ENCODE measurements at regions of chr19 and their contacts with region 1.

Region 1: DNA sequence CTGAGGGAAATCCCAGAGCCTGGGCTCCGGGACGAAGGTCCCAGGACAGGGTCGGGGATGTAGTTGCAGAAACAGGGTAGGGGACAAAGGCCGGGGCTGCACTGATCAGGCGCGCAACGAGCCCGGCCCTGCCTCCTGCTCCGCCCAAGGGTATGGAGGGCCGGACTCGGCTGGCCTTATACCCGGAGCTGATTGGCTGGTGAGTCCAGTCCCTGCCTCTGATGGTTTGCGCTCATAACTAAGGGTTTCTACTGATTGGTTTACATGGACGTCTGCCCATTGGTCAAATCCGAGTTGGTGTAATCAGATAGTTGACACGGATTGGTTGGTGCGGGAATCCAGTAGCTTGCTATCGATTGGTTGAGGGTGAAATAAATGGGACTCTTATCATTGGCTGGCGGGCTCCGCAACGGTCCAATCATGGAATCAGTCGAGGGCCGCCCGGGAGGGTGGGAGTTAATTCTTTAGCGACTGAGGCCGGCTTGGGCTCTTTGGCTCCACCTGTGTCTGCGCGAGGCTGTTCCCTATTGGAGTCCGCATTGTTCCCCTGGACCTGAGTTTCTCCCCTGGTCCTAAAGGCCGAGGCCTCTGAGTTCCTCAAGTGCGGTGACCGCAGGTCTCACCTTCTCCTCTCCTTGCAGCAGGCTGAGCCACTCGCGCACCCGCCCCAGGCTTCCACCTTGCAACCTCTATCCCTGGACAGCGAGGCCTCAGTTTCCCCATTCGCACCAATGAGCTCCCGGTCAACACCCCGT is 570 bp upstream of the MPND start:
- DNase-seq: peak; percentile 96 to 99
- H3K4me3 ChIP-seq: peak overlapping the region; percentile 55
- H3K4me3 Mint-ChIP-seq: peak overlapping the region; percentile 91
- H3K27ac Mint-ChIP-seq: peak overlapping the region; percentile 77
- H3K4me1 ChIP-seq: peaks cover 16% of the 10 kb centered on the region
- H3K4me1 Mint-ChIP-seq: peaks cover 6% of the 10 kb centered on the region
- H3K27me3 ChIP-seq: no peaks in the 10 kb centered on the region
- H3K27me3 Mint-ChIP-seq: no peaks in the 10 kb centered on the region
- CTCF ChIP-seq: peak; percentile 16 to 53

Region 2: DNA sequence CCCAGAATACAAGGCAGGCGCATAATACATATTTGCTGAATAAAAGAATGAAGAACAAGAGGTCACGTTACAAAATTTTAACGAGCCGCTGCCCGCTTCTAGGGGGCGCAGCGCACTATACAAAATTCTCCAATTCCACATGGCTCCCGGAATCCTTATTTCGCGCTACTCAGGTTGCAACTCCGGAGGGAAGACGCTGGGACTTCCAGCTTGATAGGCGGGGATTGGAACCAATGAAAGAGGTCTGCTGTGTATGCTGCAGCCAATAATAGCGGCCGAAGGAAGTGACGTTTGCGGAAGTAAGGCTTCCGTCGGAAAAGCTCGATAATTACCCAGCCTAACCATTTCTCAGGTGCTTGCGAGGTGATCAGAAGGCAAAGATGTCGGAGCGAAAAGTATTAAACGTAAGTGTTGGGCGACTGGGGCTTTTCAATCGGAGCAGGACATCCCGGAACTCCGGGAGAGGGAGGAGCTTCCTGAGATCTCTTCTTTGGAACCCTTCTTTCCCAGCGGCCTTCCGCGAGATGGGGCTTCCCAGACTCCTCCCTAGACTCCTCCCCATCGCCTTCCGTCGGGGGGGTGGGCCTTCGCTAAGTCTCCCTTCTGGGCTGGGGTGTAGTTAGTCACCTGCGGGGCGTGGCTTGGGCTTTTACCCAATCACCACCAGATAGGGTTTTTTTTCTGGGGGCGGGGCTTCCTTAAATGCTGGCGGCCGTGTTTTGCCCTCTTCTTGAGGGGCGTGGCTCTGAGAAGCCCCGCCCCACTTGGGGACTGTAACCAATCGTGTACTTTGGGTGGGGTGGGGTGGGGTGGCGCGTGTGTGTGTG is 95.8 kb before region 1 on chr19 and contains the start of gene YJU2:
- CTCF ChIA-PET with region 1: interaction called, 6 read pairs
- POLR2A ChIA-PET with region 1: interaction called, 11 read pairs
- intact Hi-C with region 1: loop called (anchors 1 kb)
- DNase-seq: peak; percentile 99
- H3K4me3 ChIP-seq: peak within 1 kb of the TSS; percentile 52
- H3K4me3 Mint-ChIP-seq: peak within 1 kb of the TSS; percentile 96
- H3K27ac Mint-ChIP-seq: peak within 1 kb of the TSS; percentile 100
- H3K4me1 ChIP-seq: 0 out of 2 replicates have a peak, but pooled peaks cover 5% of the 10 kb centered on the region
- H3K4me1 Mint-ChIP-seq: peaks cover 7% of the 10 kb centered on the region
- H3K27me3 ChIP-seq: no peaks in the 10 kb centered on the region
- H3K27me3 Mint-ChIP-seq: no peaks in the 10 kb centered on the region
- CTCF ChIP-seq: peak in 1 of 2 experiments; percentile 54
- total RNA-seq, gene YJU2: 19.5 TPM in 2 replicates

Region 3: GRCh38 chr19:4267101-4267900 is 75.5 kb before region 1 on chr19:
- CTCF ChIA-PET with region 1: interaction called, 45 read pairs
- POLR2A ChIA-PET with region 1: interaction called, 3 read pairs
- intact Hi-C with region 1: no loop called
- DNase-seq: peak; percentile 62 to 70
- H3K4me3 ChIP-seq: no peak overlapping the region
- H3K4me3 Mint-ChIP-seq: no peak overlapping the region
- H3K27ac Mint-ChIP-seq: no peak overlapping the region
- H3K4me1 ChIP-seq: no peaks in the 10 kb centered on the region
- H3K4me1 Mint-ChIP-seq: no peaks in the 10 kb centered on the region
- H3K27me3 ChIP-seq: no peaks in the 10 kb centered on the region
- H3K27me3 Mint-ChIP-seq: no peaks in the 10 kb centered on the region
- CTCF ChIP-seq: peak; percentile 81 to 95

Region 4: DNA sequence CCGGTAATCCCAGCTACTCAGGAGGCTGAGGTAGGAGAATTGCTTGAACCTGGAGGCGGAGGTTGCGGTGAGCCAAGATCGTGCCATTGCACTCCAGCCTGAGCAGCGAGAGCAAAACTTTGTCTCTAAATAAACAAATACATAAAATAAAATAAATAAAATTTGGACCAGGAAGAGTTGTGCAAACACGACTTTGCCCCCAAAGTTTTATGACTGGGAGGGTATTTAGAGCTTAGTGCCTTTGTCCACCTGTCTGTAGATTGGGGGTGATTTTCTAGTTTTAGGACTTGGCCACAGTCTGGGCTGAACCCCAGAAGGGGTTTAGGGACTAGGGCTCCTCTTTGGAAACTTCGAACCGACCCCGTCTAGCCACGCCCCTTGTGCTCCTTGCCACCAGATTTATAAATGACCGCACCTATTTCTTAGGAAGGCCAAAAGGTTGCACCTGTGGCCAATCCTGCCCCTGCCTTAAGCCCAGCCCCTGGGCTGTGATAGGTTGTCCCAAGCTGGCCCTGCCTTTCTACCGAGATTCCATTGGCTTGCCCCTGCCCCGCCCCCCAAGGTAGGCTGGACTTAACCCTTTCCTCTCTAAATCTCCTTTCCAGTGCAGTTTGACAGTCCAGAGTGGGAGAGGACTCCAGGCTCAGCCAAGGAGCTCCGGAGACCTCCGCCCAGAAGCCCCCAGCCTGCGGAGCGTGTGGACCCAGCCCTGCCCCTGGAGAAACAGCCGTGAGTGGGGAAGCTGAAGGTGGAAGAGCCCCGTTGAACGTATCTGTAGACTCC is 58.4 kb before region 1 on chr19:
- CTCF ChIA-PET with region 1: no interaction called
- POLR2A ChIA-PET with region 1: interaction called, 9 read pairs
- intact Hi-C with region 1: loop called (anchors 5 kb)
- DNase-seq: peak; percentile 88 to 94
- H3K4me3 ChIP-seq: peak overlapping the region; percentile 36
- H3K4me3 Mint-ChIP-seq: peak overlapping the region; percentile 66
- H3K27ac Mint-ChIP-seq: peak overlapping the region; percentile 59
- H3K4me1 ChIP-seq: peaks cover 16% of the 10 kb centered on the region
- H3K4me1 Mint-ChIP-seq: peaks cover 14% of the 10 kb centered on the region
- H3K27me3 ChIP-seq: no peaks in the 10 kb centered on the region
- H3K27me3 Mint-ChIP-seq: peaks cover 4% of the 10 kb centered on the region
- CTCF ChIP-seq: no peak

Region 5: GRCh38 chr19:4313847-4314490 is 28.8 kb before region 1 on chr19:
- CTCF ChIA-PET with region 1: no interaction called
- POLR2A ChIA-PET with region 1: no interaction called
- intact Hi-C with region 1: no loop called
- DNase-seq: no peak
- H3K4me3 ChIP-seq: no peak overlapping the region
- H3K4me3 Mint-ChIP-seq: no peak overlapping the region
- H3K27ac Mint-ChIP-seq: no peak overlapping the region
- H3K4me1 ChIP-seq: no peaks in the 10 kb centered on the region
- H3K4me1 Mint-ChIP-seq: no peaks in the 10 kb centered on the region
- H3K27me3 ChIP-seq: no peaks in the 10 kb centered on the region
- H3K27me3 Mint-ChIP-seq: no peaks in the 10 kb centered on the region
- CTCF ChIP-seq: no peak

Region 6: GRCh38 chr19:4375164-4376027 is 32.6 kb after region 1 on chr19:
- CTCF ChIA-PET with region 1: interaction called, 15 read pairs
- POLR2A ChIA-PET with region 1: interaction called, 20 read pairs
- intact Hi-C with region 1: no loop called
- DNase-seq: peak; percentile 96 to 98
- H3K4me3 ChIP-seq: no peak overlapping the region
- H3K4me3 Mint-ChIP-seq: peak overlapping the region; percentile 57
- H3K27ac Mint-ChIP-seq: peak overlapping the region; percentile 93
- H3K4me1 ChIP-seq: peaks cover 40% of the 10 kb centered on the region
- H3K4me1 Mint-ChIP-seq: peaks cover 17% of the 10 kb centered on the region
- H3K27me3 ChIP-seq: no peaks in the 10 kb centered on the region
- H3K27me3 Mint-ChIP-seq: no peaks in the 10 kb centered on the region
- CTCF ChIP-seq: peak; percentile 33 to 61

Region 7: DNA sequence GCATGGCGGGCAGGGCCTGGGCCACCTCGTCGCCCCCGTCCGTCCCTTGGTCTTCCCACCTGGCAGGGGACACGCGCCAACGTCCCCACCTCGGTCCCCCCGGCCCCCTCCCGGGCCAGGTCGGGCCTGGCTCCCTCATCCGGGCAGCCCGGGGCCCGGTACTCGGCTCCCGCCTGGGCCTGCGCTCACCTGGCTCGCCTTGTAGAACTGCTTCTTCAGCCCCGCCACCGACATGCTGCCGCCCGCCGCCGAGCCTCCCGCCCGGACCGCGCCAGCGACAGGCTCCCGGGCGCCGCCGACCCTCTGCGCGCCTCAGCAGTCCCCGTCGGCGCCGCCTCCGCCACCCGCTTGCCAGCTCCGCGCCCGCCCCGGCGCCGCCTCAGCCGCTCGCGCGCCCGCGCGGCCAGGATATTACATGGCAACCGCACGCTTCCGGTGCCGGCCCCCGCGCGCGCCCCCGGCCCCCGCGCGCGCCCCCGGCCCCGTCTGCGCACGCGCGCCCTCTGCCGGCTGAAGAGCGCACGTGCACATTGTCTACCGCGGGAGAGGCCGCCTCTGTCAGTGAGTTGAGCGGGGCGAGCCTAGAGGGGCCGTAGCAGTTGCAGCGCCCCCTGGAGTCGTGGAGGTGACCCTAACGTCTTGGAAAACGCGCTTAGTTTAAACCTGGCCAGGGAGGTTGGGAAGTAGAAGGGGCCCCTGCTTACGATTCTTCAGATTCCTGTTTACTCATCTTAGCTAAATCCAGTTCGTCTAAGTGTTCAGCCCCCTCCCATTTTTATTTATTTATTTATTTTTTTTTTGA is 57.5 kb after region 1 on chr19 and contains the start of gene SH3GL1:
- CTCF ChIA-PET with region 1: interaction called, 7 read pairs
- POLR2A ChIA-PET with region 1: interaction called, 14 read pairs
- intact Hi-C with region 1: no loop called
- DNase-seq: peak; percentile 87 to 88
- H3K4me3 ChIP-seq: peak within 1 kb of the TSS; percentile 98
- H3K4me3 Mint-ChIP-seq: peak within 1 kb of the TSS; percentile 75
- H3K27ac Mint-ChIP-seq: peak within 1 kb of the TSS; percentile 79
- H3K4me1 ChIP-seq: peaks cover 12% of the 10 kb centered on the region
- H3K4me1 Mint-ChIP-seq: peaks cover 14% of the 10 kb centered on the region
- H3K27me3 ChIP-seq: no peaks in the 10 kb centered on the region
- H3K27me3 Mint-ChIP-seq: no peaks in the 10 kb centered on the region
- CTCF ChIP-seq: peak; percentile 88 to 95
- total RNA-seq, gene SH3GL1: 91.3 and 91.5 TPM in 2 replicates

Region 8: GRCh38 chr19:4431808-4432674 is 89.2 kb after region 1 on chr19:
- CTCF ChIA-PET with region 1: no interaction called
- POLR2A ChIA-PET with region 1: no interaction called
- intact Hi-C with region 1: no loop called
- DNase-seq: no peak
- H3K4me3 ChIP-seq: no peak overlapping the region
- H3K4me3 Mint-ChIP-seq: no peak overlapping the region
- H3K27ac Mint-ChIP-seq: no peak overlapping the region
- H3K4me1 ChIP-seq: no peaks in the 10 kb centered on the region
- H3K4me1 Mint-ChIP-seq: no peaks in the 10 kb centered on the region
- H3K27me3 ChIP-seq: no peaks in the 10 kb centered on the region
- H3K27me3 Mint-ChIP-seq: no peaks in the 10 kb centered on the region
- CTCF ChIP-seq: no peak

Region 9: DNA sequence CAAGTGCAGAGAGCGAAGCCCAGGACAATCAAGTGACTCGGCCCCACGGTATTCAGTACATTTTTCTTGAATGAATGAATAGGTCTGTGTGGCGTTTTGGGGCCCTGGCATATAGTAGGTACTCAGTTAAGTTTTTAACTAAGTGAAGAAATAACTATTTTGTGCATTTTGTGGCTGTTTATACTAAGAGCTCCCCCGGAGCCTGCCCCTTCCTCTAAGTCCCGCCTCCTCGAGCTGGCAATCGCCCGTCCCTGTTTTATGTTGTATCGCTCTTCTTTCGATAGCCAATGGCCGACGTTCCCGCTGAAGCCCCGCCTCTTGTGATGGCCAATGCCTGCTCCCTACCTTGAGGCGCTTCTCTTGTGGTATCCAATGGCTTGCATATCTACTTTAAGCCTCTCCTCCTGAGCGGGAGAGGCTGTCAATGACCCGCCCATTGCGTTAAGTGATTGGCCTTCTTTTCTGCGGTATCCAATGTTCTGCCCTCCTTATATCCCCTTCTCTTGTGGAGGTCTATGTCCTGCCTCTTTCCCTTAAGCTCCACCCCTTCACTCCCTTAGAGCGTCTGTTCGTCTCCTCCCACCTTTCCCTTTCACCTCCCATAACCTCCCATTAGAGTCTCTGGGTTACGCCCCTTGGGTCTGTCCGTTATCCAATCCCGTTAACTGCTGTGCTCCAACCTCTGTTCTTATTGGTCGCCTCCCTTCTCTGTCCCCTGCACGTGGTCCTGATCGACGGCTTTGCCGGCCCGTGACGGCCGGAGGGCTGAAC is 128.8 kb after region 1 on chr19:
- CTCF ChIA-PET with region 1: interaction called, 3 read pairs
- POLR2A ChIA-PET with region 1: interaction called, 11 read pairs
- intact Hi-C with region 1: no loop called
- DNase-seq: peak; percentile 97 to 99
- H3K4me3 ChIP-seq: peak overlapping the region; percentile 53
- H3K4me3 Mint-ChIP-seq: no peak overlapping the region
- H3K27ac Mint-ChIP-seq: no peak overlapping the region
- H3K4me1 ChIP-seq: peaks cover 4% of the 10 kb centered on the region; the same call in 1 of the 2 replicates
- H3K4me1 Mint-ChIP-seq: peaks cover 6% of the 10 kb centered on the region
- H3K27me3 ChIP-seq: no peaks in the 10 kb centered on the region
- H3K27me3 Mint-ChIP-seq: no peaks in the 10 kb centered on the region
- CTCF ChIP-seq: no peak

Measured in Caco-2 (cell line).